Heart right ventricle (tissue), 16 donors: ENCODE measurements at regions of chr9 and their contacts with region 1.

Region 1: DNA sequence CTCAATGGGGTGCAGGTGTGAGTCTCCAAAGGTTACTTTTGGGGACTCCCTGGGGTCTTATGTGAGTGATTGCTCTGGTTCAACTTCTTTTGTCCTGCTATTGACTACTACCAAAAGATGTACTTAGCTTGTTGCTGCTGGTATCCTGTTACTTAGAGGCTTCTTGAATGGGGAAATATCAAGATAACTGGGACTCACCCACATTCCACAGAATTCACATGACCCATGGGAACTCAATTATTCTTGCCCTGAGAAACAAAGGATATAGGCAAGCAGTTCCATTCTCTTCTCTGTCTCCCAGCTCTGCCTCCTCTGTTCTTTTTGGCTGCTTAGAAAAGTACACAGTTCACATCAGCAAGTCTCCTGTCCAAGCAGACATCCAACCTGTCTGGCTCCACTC is 105.9 kb downstream of the UNC13B start:
- DNase-seq: no peak
- ATAC-seq: peak in 1 of 8 donors; percentile 11
- H3K4me3 ChIP-seq: no peak overlapping the region
- H3K27ac ChIP-seq: peak overlapping the region in 1 of 10 donors; percentile 42
- H3K4me1 ChIP-seq: peaks cover 0 to 22% (median 15%) of the 10 kb centered on the region in 9 donors
- H3K27me3 ChIP-seq: no peaks in the 10 kb centered on the region
- CTCF ChIP-seq: no peak

Region 2: DNA sequence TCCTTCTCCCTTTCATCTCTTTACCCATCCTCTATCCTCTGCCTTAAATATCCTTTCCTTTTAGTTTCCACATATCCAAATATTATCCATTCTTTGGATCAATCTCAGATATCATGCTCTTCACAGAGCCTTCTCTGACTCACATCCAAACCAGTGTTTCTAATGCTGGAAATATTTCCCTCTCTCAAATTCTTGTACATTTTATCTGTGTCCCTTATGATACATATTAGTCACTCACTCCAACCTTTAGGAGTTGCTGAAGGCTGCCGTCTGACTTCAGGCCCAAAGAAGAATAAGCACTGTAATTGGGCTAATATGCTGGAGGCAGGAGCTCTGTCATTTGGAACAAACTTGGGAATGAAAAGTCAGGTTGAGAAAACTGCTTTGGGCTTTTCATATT is 65.8 kb after region 1 on chr9:
- intact Hi-C with region 1: no loop called
- DNase-seq: no peak
- ATAC-seq: no peak
- H3K4me3 ChIP-seq: no peak overlapping the region
- H3K27ac ChIP-seq: no peak overlapping the region
- H3K4me1 ChIP-seq: no peaks in the 10 kb centered on the region
- H3K27me3 ChIP-seq: no peaks in the 10 kb centered on the region
- CTCF ChIP-seq: no peak

Region 3: DNA sequence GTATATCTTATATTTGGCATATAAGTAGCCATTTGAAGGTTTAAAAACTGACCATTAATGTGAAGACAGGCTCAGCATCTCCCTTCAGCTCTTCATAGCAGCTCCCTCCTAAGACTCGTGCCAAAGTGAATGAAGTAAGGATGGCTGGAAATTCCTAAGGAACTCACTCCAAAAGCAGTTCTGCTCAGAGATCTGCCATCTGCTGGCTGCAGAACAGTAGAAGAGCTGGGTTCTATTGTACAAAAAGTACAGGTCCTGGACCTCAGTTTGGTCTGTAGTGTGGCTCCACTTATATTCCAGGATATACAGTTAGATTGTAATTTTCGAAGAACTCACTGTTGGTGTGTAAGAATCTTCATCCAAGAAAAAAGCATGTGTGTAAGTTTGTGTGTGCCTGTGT is 117.3 kb after region 1 on chr9:
- intact Hi-C with region 1: loop called in 1 of 10 experiments (anchors 10 kb)
- DNase-seq: no peak
- ATAC-seq: peak in 3 of 8 donors; percentile 41 to 61 (median 49)
- H3K4me3 ChIP-seq: no peak overlapping the region
- H3K27ac ChIP-seq: no peak overlapping the region
- H3K4me1 ChIP-seq: peaks cover 0 to 10% (median 0%) of the 10 kb centered on the region in 9 donors
- H3K27me3 ChIP-seq: no peaks in the 10 kb centered on the region
- CTCF ChIP-seq: peak in 6 of 9 donors; percentile 20 to 51 (median 34)

Region 4: DNA sequence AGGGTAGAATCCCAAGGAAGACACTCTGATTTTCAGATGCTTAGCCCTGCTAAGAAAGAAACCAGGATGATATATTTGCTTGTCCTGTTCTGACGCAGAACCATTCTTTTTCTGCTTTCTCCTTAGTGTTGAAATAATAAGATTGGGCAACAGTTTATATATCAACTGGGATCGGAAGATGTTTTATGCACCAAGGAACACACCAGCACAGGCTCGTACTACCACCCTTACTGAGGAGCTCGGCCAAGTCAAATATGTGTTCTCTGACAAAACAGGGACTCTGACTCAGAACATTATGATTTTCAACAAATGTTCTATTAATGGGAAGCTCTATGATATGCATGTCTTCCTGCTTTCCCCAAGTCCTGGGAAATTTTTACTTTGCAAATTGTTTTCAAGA is 203.2 kb after region 1 on chr9:
- intact Hi-C with region 1: loop called in 1 of 10 experiments (anchors 10 kb)
- DNase-seq: no peak
- ATAC-seq: no peak
- H3K4me3 ChIP-seq: no peak overlapping the region
- H3K27ac ChIP-seq: no peak overlapping the region
- H3K4me1 ChIP-seq: no peaks in the 10 kb centered on the region
- H3K27me3 ChIP-seq: no peaks in the 10 kb centered on the region
- CTCF ChIP-seq: no peak